PC-3 (cell line): ENCODE measurements at regions of chr5 and their contacts with region 1.

Region 1: GRCh38 chr5:147576646-147577535 is 67.0 kb upstream of the DPYSL3 start:
- DNase-seq: peak; percentile 77
- ATAC-seq: peak; percentile 80
- H3K4me3 ChIP-seq: no peak overlapping the region
- H3K27ac ChIP-seq: no peak overlapping the region
- H3K4me1 ChIP-seq: no peaks in the 10 kb centered on the region
- H3K27me3 ChIP-seq: no peaks in the 10 kb centered on the region
- CTCF ChIP-seq: peak; percentile 95

Region 2: GRCh38 chr5:147453875-147454814 is 122.7 kb before region 1 on chr5:
- CTCF ChIA-PET with region 1: interaction called, 9 read pairs
- POLR2A ChIA-PET with region 1: no interaction called
- intact Hi-C with region 1: loop called (anchors 1 kb)
- DNase-seq: peak; percentile 71
- ATAC-seq: peak; percentile 75
- H3K4me3 ChIP-seq: peak overlapping the region; percentile 87
- H3K27ac ChIP-seq: no peak overlapping the region
- H3K4me1 ChIP-seq: no peaks in the 10 kb centered on the region; the same call in 1 of the 2 replicates
- H3K27me3 ChIP-seq: peaks cover 4% of the 10 kb centered on the region
- CTCF ChIP-seq: peak; percentile 85

Region 3: DNA sequence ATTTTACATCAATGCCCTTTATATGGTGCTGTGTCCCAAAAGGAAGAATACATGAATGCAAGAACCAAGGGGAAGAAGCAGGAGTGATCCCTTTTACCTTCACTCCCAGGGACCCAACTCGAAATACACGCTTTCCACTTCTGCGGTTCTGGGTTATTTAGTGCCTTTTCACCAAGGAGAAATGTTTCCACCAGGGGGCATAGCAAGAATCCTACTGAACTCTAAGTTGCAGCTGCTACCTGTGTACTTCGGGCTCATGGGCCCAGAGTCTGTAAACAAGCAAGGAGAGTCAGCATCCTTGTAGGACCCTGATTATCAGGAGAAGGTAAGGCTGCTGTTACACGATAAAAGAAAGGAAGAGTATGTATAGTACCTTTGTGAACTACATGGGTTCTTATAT is 112.7 kb before region 1 on chr5:
- CTCF ChIA-PET with region 1: interaction called, 8 read pairs
- POLR2A ChIA-PET with region 1: interaction called, 23 read pairs
- intact Hi-C with region 1: loop called (anchors 1 kb)
- DNase-seq: peak; percentile 57
- ATAC-seq: peak; percentile 67
- H3K4me3 ChIP-seq: no peak overlapping the region
- H3K27ac ChIP-seq: no peak overlapping the region
- H3K4me1 ChIP-seq: no peaks in the 10 kb centered on the region
- H3K27me3 ChIP-seq: no peaks in the 10 kb centered on the region
- CTCF ChIP-seq: peak; percentile 67

Region 4: DNA sequence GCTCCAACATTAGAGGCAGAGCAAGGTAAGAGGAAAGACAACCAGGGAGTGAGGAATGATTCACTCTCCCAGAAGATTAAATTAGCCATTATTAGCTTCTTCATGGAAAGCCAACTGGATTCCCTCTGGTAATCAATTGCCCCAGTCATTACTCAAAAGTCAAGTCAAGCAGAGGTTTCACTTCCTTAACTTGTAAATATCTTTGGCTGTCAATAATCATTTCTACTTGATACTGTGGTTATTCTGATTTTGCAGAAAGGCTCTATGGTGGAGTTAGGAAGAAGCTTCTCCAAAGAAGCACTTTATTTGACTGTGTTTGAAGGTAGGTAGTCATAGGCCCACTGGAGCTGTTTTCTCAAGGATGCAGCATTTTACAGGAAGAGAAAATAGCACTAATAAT is 127.7 kb after region 1 on chr5:
- CTCF ChIA-PET with region 1: no interaction called
- POLR2A ChIA-PET with region 1: no interaction called
- intact Hi-C with region 1: no loop called
- DNase-seq: no peak
- ATAC-seq: no peak
- H3K4me3 ChIP-seq: no peak overlapping the region
- H3K27ac ChIP-seq: no peak overlapping the region
- H3K4me1 ChIP-seq: no peaks in the 10 kb centered on the region
- H3K27me3 ChIP-seq: no peaks in the 10 kb centered on the region
- CTCF ChIP-seq: no peak